Psoas muscle (tissue), 8 donors: ENCODE measurements at regions of chr6 and their contacts with region 1.

Region 1: GRCh38 chr6:22328474-22328873 is 31.6 kb upstream of the PRL start:
- DNase-seq: no peak
- ATAC-seq: no peak
- H3K4me3 ChIP-seq: no peak overlapping the region
- H3K27ac ChIP-seq: no peak overlapping the region
- H3K4me1 ChIP-seq: no peaks in the 10 kb centered on the region
- H3K27me3 ChIP-seq: no peaks in the 10 kb centered on the region
- CTCF ChIP-seq: no peak

Region 2: DNA sequence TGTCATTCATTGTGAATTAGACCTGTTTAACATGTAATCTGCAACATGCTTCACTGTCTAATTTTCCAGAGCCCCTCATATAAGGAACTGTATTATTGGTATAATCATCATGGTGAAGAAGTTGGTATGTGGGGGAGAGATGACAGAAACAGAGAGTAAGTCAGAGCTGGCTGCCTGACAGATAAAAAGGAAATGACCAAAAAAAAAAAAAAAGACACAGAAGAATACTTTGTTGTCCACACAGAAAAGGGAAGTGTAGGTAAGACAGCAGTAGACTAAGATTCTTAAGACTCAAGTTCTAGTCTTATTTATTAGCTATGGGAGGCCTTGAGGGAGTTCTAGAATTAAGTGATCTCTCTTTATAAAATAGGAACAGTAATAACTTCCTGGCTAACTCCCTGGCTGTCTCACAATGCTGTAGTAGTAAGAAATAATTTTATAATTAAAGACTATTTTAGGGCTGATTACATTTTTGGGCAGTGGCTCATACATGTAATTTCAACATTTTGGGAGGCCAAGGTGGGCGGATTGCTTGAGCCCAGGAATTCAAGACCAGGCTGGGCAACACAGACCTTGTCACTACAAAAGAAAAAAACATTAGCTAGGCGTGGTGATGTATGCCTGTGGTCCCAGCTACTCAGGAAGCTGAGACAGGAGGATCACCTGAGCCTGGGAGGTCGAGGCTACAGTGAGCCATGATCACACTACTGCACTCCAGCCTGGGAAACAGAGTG is 134.1 kb before region 1 on chr6:
- intact Hi-C with region 1: no loop called
- DNase-seq: no peak
- ATAC-seq: no peak
- H3K4me3 ChIP-seq: no peak overlapping the region
- H3K27ac ChIP-seq: no peak overlapping the region
- H3K4me1 ChIP-seq: no peaks in the 10 kb centered on the region
- H3K27me3 ChIP-seq: no peaks in the 10 kb centered on the region
- CTCF ChIP-seq: no peak

Region 3: DNA sequence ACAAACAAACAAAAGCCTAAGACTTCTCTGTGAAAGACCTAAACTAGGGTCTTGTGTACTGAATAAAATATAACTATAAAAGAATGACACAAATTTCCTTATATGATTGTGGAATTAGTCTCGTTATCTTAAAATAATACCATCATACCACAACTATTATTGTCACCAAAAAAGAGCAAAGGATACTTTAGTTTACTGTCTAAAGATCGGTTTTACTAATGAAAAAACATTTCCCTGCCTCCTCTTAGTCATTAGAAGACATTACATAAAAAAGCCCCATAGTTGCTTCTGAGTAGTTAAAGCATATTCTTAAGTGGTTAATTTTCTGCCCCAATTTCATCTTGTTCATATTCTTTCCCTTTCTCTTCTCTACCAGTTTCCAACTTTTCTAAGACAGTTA is 64.7 kb before region 1 on chr6:
- intact Hi-C with region 1: no loop called
- DNase-seq: no peak
- ATAC-seq: no peak
- H3K4me3 ChIP-seq: no peak overlapping the region
- H3K27ac ChIP-seq: no peak overlapping the region
- H3K4me1 ChIP-seq: no peaks in the 10 kb centered on the region
- H3K27me3 ChIP-seq: no peaks in the 10 kb centered on the region
- CTCF ChIP-seq: no peak

Region 4: GRCh38 chr6:22306741-22307466 is 21.6 kb before region 1 on chr6:
- intact Hi-C with region 1: loop called in 1 of 2 experiments (anchors 1 kb)
- DNase-seq: no peak
- ATAC-seq: peak in 1 of 4 donors; percentile 52
- H3K4me3 ChIP-seq: no peak overlapping the region
- H3K27ac ChIP-seq: no peak overlapping the region
- H3K4me1 ChIP-seq: peaks cover 8% of the 10 kb centered on the region
- H3K27me3 ChIP-seq: no peaks in the 10 kb centered on the region
- CTCF ChIP-seq: no peak